ENCODE measurements at regions of chr1 and their contacts with region 1.

Region 1: GRCh38 chr1:203304919-203305808 is at the start of gene BTG2:
- DNase-seq: no peak
- H3K4me3 ChIP-seq: peak within 1 kb of the TSS; percentile 85
- CTCF ChIP-seq: no peak

Region 2: GRCh38 chr1:203320591-203321272 is 15.6 kb after region 1 on chr1:
- CTCF ChIA-PET with region 1: interaction called, 11 read pairs
- POLR2A ChIA-PET with region 1: interaction called, 6 read pairs
- DNase-seq: no peak
- H3K4me3 ChIP-seq: no peak overlapping the region
- CTCF ChIP-seq: no peak